Activated T-helper 1 cell treated with anti-CD3 and anti-CD28 coated beads, Interleukin-12 subunit alpha, Interleukin-12 subunit beta, Interleukin-2, Interleukin-4 antibody, amounts not matched to agents 30 ng/mL and 10 ng/mL and 1 ng/mL, durations not matched to agents 14 hours and 24 hours and 36 hours (primary cell): ENCODE measurements at regions of chr20 and their contacts with region 1.

Region 1: GRCh38 chr20:2873010-2873746 is at the start of gene PTPRA:
- DNase-seq: peak; percentile 90
- H3K4me3 Mint-ChIP-seq: peak within 1 kb of the TSS; percentile 92
- H3K27ac Mint-ChIP-seq: peak within 1 kb of the TSS; percentile 95
- H3K4me1 Mint-ChIP-seq: peaks cover 49% of the 10 kb centered on the region
- H3K27me3 Mint-ChIP-seq: no peaks in the 10 kb centered on the region
- total RNA-seq, gene PTPRA: 64.0 and 67.5 TPM in 2 replicates

Region 2: DNA sequence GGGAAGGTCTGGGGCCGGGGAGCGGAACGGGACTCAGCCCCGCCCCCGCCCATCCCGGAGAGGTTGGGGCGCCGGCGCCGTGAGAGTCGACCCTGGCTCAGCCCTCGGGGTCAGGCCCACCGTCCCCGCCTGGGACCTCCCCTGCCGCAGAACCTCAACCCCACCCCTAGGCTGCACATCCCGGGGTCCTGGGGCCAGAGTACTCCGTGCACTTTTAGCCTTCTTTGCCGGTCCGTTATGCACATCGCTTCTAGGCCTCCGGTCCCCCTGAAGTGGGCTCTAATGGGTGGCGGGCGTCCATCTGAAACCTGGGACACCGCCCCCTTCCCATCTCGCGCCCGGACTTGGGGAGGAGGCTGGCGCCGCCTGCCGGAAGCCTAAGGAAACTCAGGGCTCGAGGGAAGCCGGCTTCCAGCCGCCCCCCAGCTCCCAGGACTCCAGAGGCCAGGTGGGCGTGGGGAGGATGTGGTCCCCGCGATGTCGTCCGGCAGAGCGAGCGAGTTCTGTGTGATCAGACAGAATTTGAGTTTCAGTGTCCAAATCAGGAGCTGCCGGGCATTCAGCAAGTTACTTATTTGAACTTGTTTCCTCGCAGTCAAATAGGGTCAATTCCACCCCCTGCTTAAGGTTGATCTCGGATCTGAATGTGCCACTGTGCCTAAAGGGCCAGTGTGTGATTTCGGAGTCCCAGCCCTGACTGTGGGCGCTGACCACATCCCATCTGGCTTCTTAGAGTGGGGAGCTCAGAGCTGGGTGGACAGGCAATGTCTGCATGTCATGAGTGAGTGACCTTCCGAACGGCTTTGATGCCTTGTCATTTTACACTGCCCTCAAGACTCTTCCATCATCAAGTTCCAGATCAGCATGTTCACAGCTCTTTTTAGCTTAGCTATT is 120.4 kb before region 1 on chr20:
- intact Hi-C with region 1: loop called (anchors 2 kb)
- DNase-seq: no peak
- H3K4me3 Mint-ChIP-seq: peak overlapping the region; percentile 79
- H3K27ac Mint-ChIP-seq: no peak overlapping the region
- H3K4me1 Mint-ChIP-seq: peaks cover 22% of the 10 kb centered on the region
- H3K27me3 Mint-ChIP-seq: peaks cover 43% of the 10 kb centered on the region

Region 3: DNA sequence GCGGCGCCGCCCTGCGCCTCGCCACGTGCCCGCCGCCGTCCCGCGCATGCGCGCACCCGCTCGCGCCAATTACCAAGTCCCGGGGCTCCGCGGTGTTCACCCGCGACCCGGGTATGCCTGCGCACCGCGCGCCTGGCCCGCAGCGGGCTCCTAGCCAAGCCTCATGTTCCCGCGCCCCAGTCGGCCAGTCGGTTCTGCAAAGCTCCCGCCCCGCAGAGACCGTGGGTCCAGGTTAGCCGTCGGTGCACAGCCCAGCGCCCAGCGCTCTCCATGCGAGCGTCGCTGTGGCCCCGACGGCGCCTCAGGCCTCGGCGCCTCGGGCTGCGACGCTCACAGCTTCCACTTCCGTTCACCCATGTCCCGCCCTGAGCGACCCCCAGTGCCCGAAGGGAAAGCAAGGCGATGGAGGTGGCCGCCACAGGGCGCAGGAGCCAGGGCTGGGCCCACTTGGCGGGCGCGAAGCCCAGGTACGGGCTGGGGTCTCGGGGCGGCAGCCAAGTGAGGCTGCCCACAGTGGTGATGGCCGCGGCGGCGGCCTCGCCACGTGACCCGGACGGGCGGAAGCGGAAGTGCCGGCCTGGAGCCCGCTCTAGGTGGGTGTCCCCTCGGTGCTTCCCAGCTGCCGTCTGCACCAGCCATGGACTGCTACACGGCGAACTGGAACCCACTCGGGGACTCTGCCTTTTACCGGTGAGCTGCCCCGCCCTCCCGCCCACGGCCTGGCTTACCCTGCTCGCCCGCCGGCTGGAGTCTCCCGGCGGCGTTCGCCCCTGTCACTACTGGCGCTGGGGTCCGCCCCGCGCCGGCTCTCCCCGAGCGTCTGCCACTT is 32.8 kb before region 1 on chr20 and contains the starts of genes PCED1A and VPS16:
- intact Hi-C with region 1: loop called (anchors 1 kb)
- DNase-seq: peak; percentile 86
- H3K4me3 Mint-ChIP-seq: peak within 1 kb of the TSS; percentile 92
- H3K27ac Mint-ChIP-seq: peak within 1 kb of the TSS; percentile 88
- H3K4me1 Mint-ChIP-seq: peaks cover 32% of the 10 kb centered on the region
- H3K27me3 Mint-ChIP-seq: no peaks in the 10 kb centered on the region
- total RNA-seq, gene PCED1A: 24.0 and 27.9 TPM in 2 replicates
- total RNA-seq, gene VPS16: 46.0 and 48.9 TPM in 2 replicates

Region 4: GRCh38 chr20:2914160-2914559 is 41.0 kb after region 1 on chr20:
- intact Hi-C with region 1: loop called (anchors 1 kb)
- DNase-seq: no peak
- H3K4me3 Mint-ChIP-seq: no peak overlapping the region
- H3K27ac Mint-ChIP-seq: no peak overlapping the region
- H3K4me1 Mint-ChIP-seq: peaks cover 8% of the 10 kb centered on the region
- H3K27me3 Mint-ChIP-seq: no peaks in the 10 kb centered on the region

Region 5: DNA sequence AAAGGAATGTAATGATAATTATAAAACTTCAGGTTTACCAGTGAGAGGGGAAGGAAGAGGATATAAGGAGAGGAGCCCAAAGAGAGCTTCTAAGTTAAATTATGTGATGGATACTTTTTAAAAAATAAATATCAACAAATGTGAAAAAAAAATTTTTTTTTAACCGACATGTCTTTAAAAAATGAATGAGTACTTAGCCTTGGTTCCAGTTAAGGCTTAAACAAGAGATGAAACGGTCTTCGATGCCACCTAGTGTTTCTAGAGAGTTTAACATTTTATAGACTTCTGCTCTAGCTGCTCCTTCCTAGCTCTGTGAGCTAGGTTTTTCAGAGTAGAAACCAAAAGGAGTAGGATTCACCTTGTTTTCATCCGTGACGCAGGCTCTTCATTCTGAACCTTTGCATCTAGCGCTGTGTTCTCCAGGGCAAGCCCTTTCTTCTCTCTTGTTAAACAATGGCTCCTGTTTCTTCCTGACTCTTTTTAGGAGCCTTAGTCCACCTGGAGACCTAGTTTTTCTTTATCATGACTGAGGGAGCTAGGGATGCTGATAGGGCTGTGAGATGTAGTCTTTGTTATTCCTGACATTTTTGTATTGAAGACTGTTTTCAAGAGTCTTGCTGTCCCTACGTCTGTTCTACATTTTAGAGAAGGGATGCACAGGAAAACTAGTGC is 127.8 kb after region 1 on chr20:
- intact Hi-C with region 1: loop called (anchors 5 kb)
- DNase-seq: no peak
- H3K4me3 Mint-ChIP-seq: no peak overlapping the region
- H3K27ac Mint-ChIP-seq: no peak overlapping the region
- H3K4me1 Mint-ChIP-seq: no peaks in the 10 kb centered on the region
- H3K27me3 Mint-ChIP-seq: no peaks in the 10 kb centered on the region

Region 6: GRCh38 chr20:3156811-3157619 is 283.8 kb after region 1 on chr20:
- intact Hi-C with region 1: loop called (anchors 5 kb)
- DNase-seq: no peak
- H3K4me3 Mint-ChIP-seq: peak overlapping the region; percentile 78
- H3K27ac Mint-ChIP-seq: peak overlapping the region; percentile 90
- H3K4me1 Mint-ChIP-seq: peaks cover 44% of the 10 kb centered on the region
- H3K27me3 Mint-ChIP-seq: no peaks in the 10 kb centered on the region